K562 (cell line): ENCODE measurements at regions of chr3 and their contacts with region 1.

Region 1: GRCh38 chr3:32934150-32934742 is 17.2 kb upstream of the CCR4 start:
- DNase-seq: peak in 1 of 4 experiments; percentile 54
- ATAC-seq: peak; percentile 61; the same call in 2 of the 3 replicates
- H3K4me3 ChIP-seq: no peak overlapping the region
- H3K27ac ChIP-seq: no peak overlapping the region
- H3K4me1 ChIP-seq: no peaks in the 10 kb centered on the region; a peak in 1 of 5 replicates
- H3K27me3 ChIP-seq: no peaks in the 10 kb centered on the region; a peak in 1 of 5 replicates
- CTCF ChIP-seq: peak; percentile 65 to 84 (median 78)
- EP300 ChIP-seq: no peak
- POLR2A ChIP-seq: no peak
- RAD21 ChIP-seq: peak; percentile 83 to 91

Region 2: DNA sequence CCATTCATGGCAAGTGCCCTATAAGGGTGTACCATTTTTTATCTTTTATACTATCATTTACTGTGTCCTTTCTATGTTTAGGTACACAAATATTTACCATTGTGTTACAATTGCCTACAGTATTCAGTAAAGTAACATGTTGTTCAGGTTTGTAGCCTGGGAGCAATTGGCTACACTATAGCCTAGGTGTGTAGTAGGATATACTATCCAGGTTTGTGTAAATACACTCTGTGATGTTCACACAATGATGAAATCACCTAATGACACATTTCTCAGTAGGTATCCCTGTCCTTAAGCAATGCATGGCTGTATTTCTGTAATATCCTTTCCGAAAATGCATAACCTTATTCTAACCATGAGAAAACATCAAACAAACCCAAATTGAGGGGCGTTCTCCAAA is 267.1 kb before region 1 on chr3:
- CTCF ChIA-PET with region 1: no interaction called
- POLR2A ChIA-PET with region 1: no interaction called
- in situ Hi-C with region 1: no loop called
- intact Hi-C with region 1: loop called (anchors 10 kb)
- DNase-seq: no peak
- ATAC-seq: no peak
- H3K4me3 ChIP-seq: no peak overlapping the region
- H3K27ac ChIP-seq: no peak overlapping the region
- H3K4me1 ChIP-seq: peaks cover 0 to 2% of the 10 kb centered on the region in 2 experiments; a peak in 1 of 5 replicates
- H3K27me3 ChIP-seq: 0 out of 5 replicates have a peak, but pooled peaks cover 0 to 2% of the 10 kb centered on the region in 2 experiments
- CTCF ChIP-seq: no peak
- EP300 ChIP-seq: no peak
- POLR2A ChIP-seq: no peak
- RAD21 ChIP-seq: no peak

Region 3: GRCh38 chr3:32733631-32734229 is 200.5 kb before region 1 on chr3:
- CTCF ChIA-PET with region 1: interaction called, 18 read pairs
- POLR2A ChIA-PET with region 1: no interaction called
- in situ Hi-C with region 1: no loop called
- intact Hi-C with region 1: loop called (anchors 2 kb)
- DNase-seq: peak; percentile 23 to 42 (median 26)
- ATAC-seq: peak; percentile 78
- H3K4me3 ChIP-seq: no peak overlapping the region
- H3K27ac ChIP-seq: no peak overlapping the region
- H3K4me1 ChIP-seq: no peaks in the 10 kb centered on the region
- H3K27me3 ChIP-seq: no peaks in the 10 kb centered on the region
- CTCF ChIP-seq: peak; percentile 34 to 67 (median 44); a peak in 3 of 6 replicates
- EP300 ChIP-seq: no peak
- POLR2A ChIP-seq: no peak
- RAD21 ChIP-seq: peak; percentile 59 to 66

Region 4: DNA sequence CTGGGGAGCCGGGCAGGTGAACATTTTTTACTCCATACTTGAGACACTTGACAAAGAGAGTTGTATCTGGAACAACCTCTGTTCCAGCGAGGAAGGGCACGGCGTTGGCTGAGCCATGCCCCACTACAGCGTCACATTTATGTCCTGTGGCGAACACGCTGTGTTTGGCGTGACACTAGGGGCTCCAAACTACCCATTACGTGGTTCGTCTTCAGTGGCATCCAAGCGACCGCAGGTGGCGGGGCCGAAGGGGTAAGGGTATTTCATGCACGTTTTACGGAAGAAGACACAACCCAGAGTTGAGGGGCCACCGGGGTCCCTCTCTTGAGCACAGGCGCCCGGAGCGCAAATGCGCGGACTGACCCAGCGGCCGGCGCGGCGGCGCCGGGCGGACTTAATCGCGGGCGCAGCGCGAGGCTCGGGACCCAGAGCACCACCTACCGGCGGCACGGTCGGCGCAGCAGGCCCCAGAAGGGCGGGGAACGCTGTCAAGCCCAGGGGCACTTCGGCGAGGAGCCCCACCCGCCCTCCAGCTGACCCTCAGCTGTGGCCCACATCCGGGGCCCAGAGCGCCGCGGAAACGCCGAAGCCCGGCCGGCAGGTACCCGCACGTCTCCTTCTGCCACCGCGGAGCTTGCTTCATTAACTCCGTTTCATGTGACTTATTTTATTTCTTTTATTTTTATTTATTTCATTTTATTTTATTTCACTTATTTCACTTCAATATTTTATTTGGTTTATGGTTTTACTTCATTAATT is 152.9 kb before region 1 on chr3:
- CTCF ChIA-PET with region 1: interaction called, 5 read pairs
- POLR2A ChIA-PET with region 1: no interaction called
- in situ Hi-C with region 1: no loop called
- intact Hi-C with region 1: loop called (anchors 5 kb)
- DNase-seq: peak; percentile 90 to 95 (median 92)
- ATAC-seq: peak; percentile 97
- H3K4me3 ChIP-seq: peak overlapping the region; percentile 50
- H3K27ac ChIP-seq: peak overlapping the region; percentile 37; the same call in 2 of the 3 replicates
- H3K4me1 ChIP-seq: peaks cover 4 to 20% of the 10 kb centered on the region in 2 experiments; a peak in 4 of 5 replicates
- H3K27me3 ChIP-seq: 0 out of 5 replicates have a peak, but pooled peaks cover 0 to under 1% of the 10 kb centered on the region in 2 experiments
- CTCF ChIP-seq: peak; percentile 84 to 95 (median 87)
- EP300 ChIP-seq: 0 out of 2 replicates have a peak, but pooled peaks have one; percentile 15
- POLR2A ChIP-seq: peak; percentile 77
- RAD21 ChIP-seq: peak; percentile 57 to 76

Region 5: GRCh38 chr3:32960404-32961170 is 26.3 kb after region 1 on chr3:
- CTCF ChIA-PET with region 1: no interaction called
- POLR2A ChIA-PET with region 1: no interaction called
- in situ Hi-C with region 1: no loop called
- intact Hi-C with region 1: no loop called
- DNase-seq: no peak
- ATAC-seq: peak; percentile 34; the same call in 1 of the 3 replicates
- H3K4me3 ChIP-seq: no peak overlapping the region
- H3K27ac ChIP-seq: no peak overlapping the region
- H3K4me1 ChIP-seq: no peaks in the 10 kb centered on the region; a peak in 2 of 5 replicates
- H3K27me3 ChIP-seq: no peaks in the 10 kb centered on the region
- CTCF ChIP-seq: no peak
- EP300 ChIP-seq: no peak
- POLR2A ChIP-seq: no peak
- RAD21 ChIP-seq: no peak

Region 6: DNA sequence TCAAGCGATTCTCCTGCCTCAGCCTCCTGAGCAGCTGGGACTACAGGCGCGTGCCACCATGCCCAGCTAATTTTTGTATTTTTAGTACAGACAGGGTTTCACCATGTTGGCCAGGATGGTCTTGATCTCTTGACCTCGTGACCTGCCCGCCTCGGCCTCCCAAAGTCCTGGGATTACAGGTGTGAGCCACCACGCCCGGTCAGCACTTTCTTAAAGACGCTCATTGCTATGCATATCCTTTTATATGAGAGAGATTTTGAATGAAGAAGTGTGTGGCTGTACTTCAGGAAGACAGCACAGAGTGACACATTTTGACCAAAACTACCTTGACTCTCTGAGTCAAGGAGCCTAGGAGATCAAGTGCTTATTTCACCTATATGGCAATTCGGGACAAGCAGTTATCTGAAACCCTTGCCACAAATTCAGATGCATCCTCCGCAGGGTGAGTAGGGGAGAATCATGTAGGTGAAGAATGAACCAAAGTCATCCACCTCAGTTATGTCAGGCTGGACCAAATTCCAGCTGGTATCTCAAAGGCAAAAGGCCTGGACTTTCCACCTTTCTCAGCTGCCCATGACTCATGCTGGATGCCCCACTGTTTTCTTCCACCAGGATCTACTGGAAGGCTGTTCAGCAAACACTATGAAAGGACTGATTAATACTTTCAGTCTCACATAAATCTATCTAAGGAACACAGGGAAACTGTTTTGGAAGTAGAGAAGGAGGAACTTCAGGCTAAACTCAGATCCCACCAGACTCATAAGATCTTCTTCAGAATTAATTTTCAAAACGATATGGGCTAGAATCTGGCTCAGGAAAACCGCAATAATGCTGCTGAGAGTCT is 252.5 kb after region 1 on chr3:
- CTCF ChIA-PET with region 1: no interaction called
- POLR2A ChIA-PET with region 1: no interaction called
- in situ Hi-C with region 1: no loop called
- intact Hi-C with region 1: no loop called
- DNase-seq: no peak
- ATAC-seq: no peak
- H3K4me3 ChIP-seq: no peak overlapping the region
- H3K27ac ChIP-seq: no peak overlapping the region
- H3K4me1 ChIP-seq: no peaks in the 10 kb centered on the region
- H3K27me3 ChIP-seq: peaks cover 7 to 16% of the 10 kb centered on the region in 2 experiments; a peak in 4 of 5 replicates
- CTCF ChIP-seq: no peak
- EP300 ChIP-seq: no peak
- POLR2A ChIP-seq: no peak
- RAD21 ChIP-seq: no peak